Adrenal gland (tissue), 19 donors: ENCODE measurements at regions of chr10 and their contacts with region 1.

Region 1: DNA sequence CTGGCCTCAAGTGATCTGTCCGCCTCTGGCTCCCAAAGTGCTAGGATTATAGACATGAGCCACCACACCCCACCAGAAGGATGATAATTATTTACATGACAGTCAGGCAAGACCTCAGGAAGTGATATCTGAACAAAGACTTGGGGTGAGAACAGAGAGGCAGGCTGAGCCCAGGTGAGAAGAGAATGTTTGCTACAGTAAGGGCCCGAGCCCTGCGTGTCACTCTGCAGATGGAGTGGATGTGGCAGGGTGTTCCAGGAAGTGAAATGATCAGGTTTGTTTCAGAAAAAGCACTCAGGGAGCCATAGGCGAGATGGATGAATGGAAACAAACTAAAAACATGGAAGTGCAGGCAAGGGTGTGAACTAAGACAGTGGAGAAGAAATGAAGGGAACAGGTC is 22.2 kb downstream of the SFMBT2 start:
- DNase-seq: no peak
- H3K4me3 ChIP-seq: no peak overlapping the region
- H3K27ac ChIP-seq: no peak overlapping the region
- H3K4me1 ChIP-seq: peaks cover 0 to 6% of the 10 kb centered on the region in 2 donors
- H3K27me3 ChIP-seq: no peaks in the 10 kb centered on the region
- CTCF ChIP-seq: no peak
- POLR2A ChIP-seq: no peak

Region 2: DNA sequence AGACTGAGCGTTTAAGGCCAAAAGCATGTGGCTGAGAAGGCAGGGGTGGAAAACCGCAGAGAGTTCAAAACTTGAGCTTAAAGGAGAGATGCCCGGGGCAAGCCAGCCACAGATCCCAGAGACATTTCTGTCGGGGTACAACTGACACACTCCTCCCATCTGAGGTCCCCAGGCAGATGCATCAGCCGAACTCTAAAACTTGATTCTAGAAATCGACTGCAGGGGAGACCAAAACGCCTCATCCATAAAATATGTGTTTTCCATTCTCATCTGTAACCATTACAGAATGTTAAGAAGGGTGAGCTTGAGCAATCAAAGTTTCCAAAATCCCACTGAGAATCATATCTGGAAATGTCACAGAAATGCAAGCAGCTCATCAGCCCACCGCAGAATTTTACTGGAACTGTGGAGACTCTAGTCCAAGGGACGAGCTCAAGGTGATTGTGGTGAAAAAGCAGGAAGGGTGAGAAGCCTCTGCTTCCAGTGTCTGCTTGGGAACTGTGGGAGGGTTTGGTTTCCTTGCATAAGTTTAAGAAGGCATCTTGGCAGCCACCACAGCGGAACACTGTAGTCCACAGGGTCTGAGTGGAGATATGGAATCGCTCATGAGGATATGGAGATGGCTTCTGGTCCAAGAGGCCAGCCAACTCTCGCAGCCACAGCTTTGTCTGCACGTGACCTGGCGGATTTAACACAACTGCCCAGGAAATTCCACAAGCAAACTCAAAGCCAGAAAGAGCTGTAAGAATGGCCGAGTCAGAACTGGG is 226.9 kb before region 1 on chr10:
- intact Hi-C with region 1: no loop called
- DNase-seq: peak in 4 of 7 donors; percentile 19 to 65 (median 24)
- H3K4me3 ChIP-seq: no peak overlapping the region
- H3K27ac ChIP-seq: no peak overlapping the region
- H3K4me1 ChIP-seq: no peaks in the 10 kb centered on the region
- H3K27me3 ChIP-seq: no peaks in the 10 kb centered on the region
- CTCF ChIP-seq: no peak
- POLR2A ChIP-seq: no peak

Region 3: GRCh38 chr10:9331583-9332008 is 1943.0 kb after region 1 on chr10:
- intact Hi-C with region 1: loop called in 1 of 2 experiments (anchors 10 kb)
- DNase-seq: no peak
- H3K4me3 ChIP-seq: no peak overlapping the region
- H3K27ac ChIP-seq: no peak overlapping the region
- H3K4me1 ChIP-seq: no peaks in the 10 kb centered on the region
- H3K27me3 ChIP-seq: no peaks in the 10 kb centered on the region
- CTCF ChIP-seq: peak; percentile 64 to 88 (median 70)
- POLR2A ChIP-seq: no peak